Activated CD4-positive, alpha-beta memory T cell treated with anti-CD3 and anti-CD28 coated beads for 36 hours (primary cell): ENCODE measurements at regions of chr2 and their contacts with region 1.

Region 1: DNA sequence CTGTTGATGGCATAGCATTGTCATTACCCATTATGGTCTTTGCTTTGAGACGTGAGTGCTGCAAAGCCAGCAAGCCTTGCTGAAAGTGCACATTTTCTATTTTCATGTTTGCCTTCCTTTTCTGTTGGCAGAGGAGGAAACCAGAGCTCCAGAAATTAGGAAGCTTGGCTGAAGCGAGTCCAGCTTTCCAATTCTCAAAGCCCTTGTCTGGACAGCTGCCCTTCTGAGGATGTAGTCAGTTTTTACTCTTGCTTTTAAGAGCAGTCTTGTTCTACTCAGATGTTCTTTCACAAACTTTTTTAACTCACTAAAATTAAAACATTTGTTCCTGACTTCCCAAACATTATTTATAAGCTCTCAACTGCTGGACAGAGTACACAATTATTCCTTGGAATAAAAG is 93.8 kb downstream of the ICOS start:
- DNase-seq: no peak
- H3K4me3 Mint-ChIP-seq: no peak overlapping the region
- H3K27ac Mint-ChIP-seq: no peak overlapping the region
- H3K4me1 Mint-ChIP-seq: peaks cover 24% of the 10 kb centered on the region
- H3K27me3 Mint-ChIP-seq: no peaks in the 10 kb centered on the region

Region 2: GRCh38 chr2:203637471-203638167 is 392.7 kb before region 1 on chr2:
- CTCF ChIA-PET with region 1: no interaction called
- POLR2A ChIA-PET with region 1: no interaction called
- intact Hi-C with region 1: no loop called
- DNase-seq: no peak
- H3K4me3 Mint-ChIP-seq: no peak overlapping the region
- H3K27ac Mint-ChIP-seq: no peak overlapping the region
- H3K4me1 Mint-ChIP-seq: peaks cover 15% of the 10 kb centered on the region
- H3K27me3 Mint-ChIP-seq: no peaks in the 10 kb centered on the region

Region 3: GRCh38 chr2:204051476-204051875 is 21.2 kb after region 1 on chr2:
- CTCF ChIA-PET with region 1: interaction called, 11 read pairs
- POLR2A ChIA-PET with region 1: no interaction called
- intact Hi-C with region 1: loop called (anchors 2 kb)
- DNase-seq: no peak
- H3K4me3 Mint-ChIP-seq: no peak overlapping the region
- H3K27ac Mint-ChIP-seq: no peak overlapping the region
- H3K4me1 Mint-ChIP-seq: peaks cover 16% of the 10 kb centered on the region
- H3K27me3 Mint-ChIP-seq: no peaks in the 10 kb centered on the region